Posterior cingulate gyrus (tissue), 11 donors: ENCODE measurements at regions of chr1 and their contacts with region 1.

Region 1: GRCh38 chr1:228405987-228406265 is 709 bp downstream of the TRIM11 start:
- DNase-seq: no peak

Region 2: GRCh38 chr1:228097328-228098081 is 308.4 kb before region 1 on chr1:
- intact Hi-C with region 1: no loop called
- DNase-seq: peak in 2 of 10 donors; percentile 75 to 82

Region 3: DNA sequence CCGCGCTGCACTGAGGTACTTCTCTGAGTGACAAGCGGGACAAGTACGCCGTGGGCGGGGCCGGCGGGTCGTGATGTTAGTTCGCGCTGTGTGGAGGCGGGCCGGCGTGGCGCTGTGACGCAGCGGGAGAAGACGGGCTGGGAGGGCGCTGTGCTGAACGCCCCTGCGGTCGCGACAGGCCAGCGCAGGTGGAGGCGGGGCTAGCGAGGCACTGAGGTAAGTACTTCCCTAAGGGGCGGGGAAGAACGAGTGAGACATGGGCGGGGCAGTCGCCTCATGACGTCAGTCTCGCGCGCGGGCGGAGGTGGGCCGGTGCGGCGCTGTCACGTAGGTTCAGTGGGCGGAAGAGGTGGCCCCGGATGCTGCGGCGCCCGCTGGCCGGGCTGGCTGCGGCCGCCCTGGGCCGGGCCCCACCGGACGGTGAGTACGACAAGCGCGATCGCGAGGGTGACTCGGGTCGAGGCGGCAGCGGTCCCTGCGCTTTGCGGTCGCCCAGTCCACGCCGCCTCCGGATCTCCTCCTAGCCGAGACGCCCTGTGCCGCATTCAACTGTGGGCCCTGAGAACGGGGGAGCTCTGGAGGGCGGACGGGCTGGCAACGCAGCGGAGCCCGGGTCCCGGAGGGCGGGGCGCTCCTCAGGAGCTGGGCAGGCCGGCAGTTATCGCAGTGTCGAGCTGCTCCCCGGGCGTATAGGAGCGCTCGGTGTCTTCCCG is 265.8 kb before region 1 on chr1 and contains the start of gene GUK1:
- intact Hi-C with region 1: loop called (anchors 10 kb)
- DNase-seq: peak; percentile 95 to 100 (median 100)

Region 4: GRCh38 chr1:228217551-228218344 is 188.2 kb before region 1 on chr1:
- intact Hi-C with region 1: no loop called
- DNase-seq: no peak

Region 5: DNA sequence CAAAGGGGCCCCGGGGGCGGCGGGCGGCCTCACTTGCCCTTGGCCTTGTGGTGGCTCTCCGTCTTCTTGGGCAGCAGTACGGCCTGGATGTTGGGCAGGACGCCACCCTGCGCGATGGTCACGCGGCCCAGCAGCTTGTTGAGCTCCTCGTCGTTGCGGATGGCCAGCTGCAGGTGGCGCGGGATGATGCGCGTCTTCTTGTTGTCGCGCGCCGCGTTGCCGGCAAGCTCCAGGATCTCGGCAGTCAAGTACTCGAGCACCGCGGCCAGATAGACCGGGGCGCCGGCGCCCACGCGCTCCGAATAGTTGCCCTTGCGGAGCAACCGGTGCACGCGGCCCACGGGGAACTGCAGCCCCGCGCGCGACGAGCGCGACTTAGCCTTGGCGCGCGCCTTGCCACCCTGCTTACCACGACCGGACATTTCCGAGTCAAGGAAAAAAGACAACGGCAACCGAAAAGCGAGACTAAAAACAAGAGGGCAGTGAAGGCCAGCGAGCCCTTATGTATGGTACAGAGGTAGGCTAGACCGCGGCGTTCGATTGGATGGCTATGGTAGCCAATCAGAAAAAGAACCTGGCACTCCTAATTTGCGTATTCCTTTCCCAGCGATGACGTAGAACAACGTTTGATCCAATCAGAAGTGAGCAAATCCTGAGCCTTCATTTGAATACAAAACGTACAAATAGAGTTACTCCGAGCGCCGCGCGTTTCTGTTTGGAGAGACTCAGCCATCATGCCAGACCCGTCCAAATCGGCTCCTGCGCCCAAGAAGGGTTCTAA is 51.7 kb after region 1 on chr1:
- intact Hi-C with region 1: loop called (anchors 5 kb)
- DNase-seq: peak; percentile 76 to 98 (median 88)